CD8-positive, alpha-beta T cell (primary cell): ENCODE measurements at regions of chr5 and their contacts with region 1.

Region 1: DNA sequence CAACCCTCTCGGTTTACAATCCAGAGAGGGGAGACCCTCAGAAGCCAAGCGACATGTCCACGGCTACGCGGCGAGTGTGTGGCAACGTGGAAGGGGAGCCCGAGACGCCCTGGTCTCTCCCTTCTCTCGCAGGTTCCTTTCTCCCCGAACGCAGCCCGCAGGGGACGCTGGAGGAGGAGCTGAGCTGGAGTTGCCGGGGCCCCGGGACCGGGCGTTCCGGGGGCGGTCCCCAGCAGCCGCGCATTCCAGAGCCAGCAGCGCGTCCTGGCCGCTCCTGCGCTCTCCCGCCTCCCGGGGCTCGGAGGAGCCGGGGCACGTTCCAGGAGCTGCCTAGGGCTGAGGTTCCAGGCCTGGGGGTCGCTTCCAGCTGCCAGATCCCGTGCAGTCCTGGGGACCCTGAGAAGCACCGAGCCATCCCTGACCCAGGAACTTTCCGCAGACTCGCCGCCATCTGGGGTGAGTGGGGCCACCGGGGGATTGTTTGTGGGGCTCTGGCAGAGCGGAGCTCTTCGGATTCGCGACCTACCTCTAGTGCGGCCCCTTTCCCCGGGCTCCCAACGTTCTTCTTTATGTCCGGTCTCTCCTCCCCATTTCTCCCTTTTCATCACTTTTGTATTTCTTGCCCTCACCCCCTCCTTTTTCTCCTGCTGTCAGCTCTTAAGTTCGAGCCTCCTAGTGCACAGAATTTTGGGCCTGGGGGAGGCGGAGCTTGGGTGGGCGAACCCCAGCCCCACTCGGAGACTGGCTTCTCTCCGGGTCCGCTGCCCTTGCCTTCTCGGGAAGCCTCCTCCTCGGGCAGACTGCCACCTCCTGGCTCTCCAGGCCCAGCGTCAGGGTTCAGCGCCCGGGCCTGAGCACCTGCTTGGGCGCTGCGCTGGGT is at the start of gene SMIM3:
- DNase-seq: peak; percentile 39 to 80 (median 70)
- ATAC-seq: peak; percentile 58
- H3K4me3 ChIP-seq: peak within 1 kb of the TSS; percentile 70 to 88
- H3K4me3 Mint-ChIP-seq: peak within 1 kb of the TSS; percentile 96
- H3K27ac ChIP-seq: peak within 1 kb of the TSS; percentile 41 to 65
- H3K27ac Mint-ChIP-seq: peak within 1 kb of the TSS; percentile 91
- H3K4me1 ChIP-seq: peaks cover 33% of the 10 kb centered on the region
- H3K4me1 Mint-ChIP-seq: peaks cover 57% of the 10 kb centered on the region
- H3K27me3 ChIP-seq: no peaks in the 10 kb centered on the region
- H3K27me3 Mint-ChIP-seq: no peaks in the 10 kb centered on the region
- CTCF ChIP-seq: no peak
- total RNA-seq, gene SMIM3: 4.6 to 4.9 TPM

Region 2: DNA sequence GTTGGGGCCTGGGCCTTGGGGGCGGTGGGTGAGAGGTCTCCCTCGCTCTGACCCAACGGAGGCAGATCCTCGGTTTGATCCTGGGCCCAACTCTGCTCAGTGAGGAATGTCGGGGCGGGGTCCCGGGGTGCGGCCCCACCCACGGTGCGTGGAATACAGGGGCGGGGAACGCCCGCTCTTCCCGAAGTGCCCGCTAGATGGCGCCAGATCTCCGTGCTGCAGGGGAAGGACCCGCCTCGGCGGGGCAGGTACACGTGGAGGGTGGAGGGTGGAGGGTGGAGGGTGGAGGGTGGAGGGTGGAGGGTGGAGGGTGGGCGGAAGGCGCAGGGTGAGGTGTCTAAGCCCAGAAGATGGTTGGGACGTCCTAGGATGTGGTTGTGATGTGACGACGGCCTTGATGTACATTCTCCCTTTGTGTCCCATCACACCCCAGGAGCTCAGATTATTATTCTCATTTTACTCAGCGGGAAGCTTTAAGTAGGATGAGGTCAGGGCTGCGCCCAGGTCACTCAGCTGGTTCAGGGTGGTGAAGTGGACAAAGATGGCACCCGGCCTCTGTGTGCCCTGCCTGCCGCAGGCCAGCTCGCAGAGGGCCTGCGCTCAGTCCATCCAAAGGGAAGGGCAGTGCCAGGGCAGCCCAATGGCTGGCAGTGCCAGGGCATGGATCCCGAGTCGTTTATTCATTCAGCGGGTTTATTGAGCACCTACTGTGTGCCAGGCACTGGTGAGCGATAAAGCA is 319.8 kb before region 1 on chr5:
- CTCF ChIA-PET with region 1: interaction called, 10 read pairs
- POLR2A ChIA-PET with region 1: no interaction called
- intact Hi-C with region 1: loop called in 1 of 2 experiments (anchors 2 kb)
- DNase-seq: peak; percentile 73 to 93 (median 84)
- ATAC-seq: peak; percentile 93
- H3K4me3 ChIP-seq: no peak overlapping the region
- H3K4me3 Mint-ChIP-seq: peak overlapping the region; percentile 51
- H3K27ac ChIP-seq: peak overlapping the region; percentile 13 to 31
- H3K27ac Mint-ChIP-seq: peak overlapping the region; percentile 67
- H3K4me1 ChIP-seq: peaks cover 20% of the 10 kb centered on the region
- H3K4me1 Mint-ChIP-seq: peaks cover 37% of the 10 kb centered on the region
- H3K27me3 ChIP-seq: no peaks in the 10 kb centered on the region
- H3K27me3 Mint-ChIP-seq: no peaks in the 10 kb centered on the region
- CTCF ChIP-seq: peak; percentile 68

Region 3: GRCh38 chr5:150700594-150701293 is 78.0 kb before region 1 on chr5 and contains the start of gene RBM22:
- CTCF ChIA-PET with region 1: interaction called, 17 read pairs
- POLR2A ChIA-PET with region 1: interaction called, 16 read pairs
- intact Hi-C with region 1: loop called (anchors 1 to 2 kb)
- DNase-seq: peak; percentile 82 to 96 (median 94)
- ATAC-seq: peak; percentile 90
- H3K4me3 ChIP-seq: peak within 1 kb of the TSS; percentile 80 to 81
- H3K4me3 Mint-ChIP-seq: no peak within 1 kb of the TSS
- H3K27ac ChIP-seq: peak within 1 kb of the TSS; percentile 94 to 97
- H3K27ac Mint-ChIP-seq: no peak within 1 kb of the TSS
- H3K4me1 ChIP-seq: peaks cover 19% of the 10 kb centered on the region
- H3K4me1 Mint-ChIP-seq: peaks cover 2% of the 10 kb centered on the region
- H3K27me3 ChIP-seq: no peaks in the 10 kb centered on the region
- H3K27me3 Mint-ChIP-seq: no peaks in the 10 kb centered on the region
- CTCF ChIP-seq: peak; percentile 85
- total RNA-seq, gene RBM22: 119 to 125 TPM

Region 4: DNA sequence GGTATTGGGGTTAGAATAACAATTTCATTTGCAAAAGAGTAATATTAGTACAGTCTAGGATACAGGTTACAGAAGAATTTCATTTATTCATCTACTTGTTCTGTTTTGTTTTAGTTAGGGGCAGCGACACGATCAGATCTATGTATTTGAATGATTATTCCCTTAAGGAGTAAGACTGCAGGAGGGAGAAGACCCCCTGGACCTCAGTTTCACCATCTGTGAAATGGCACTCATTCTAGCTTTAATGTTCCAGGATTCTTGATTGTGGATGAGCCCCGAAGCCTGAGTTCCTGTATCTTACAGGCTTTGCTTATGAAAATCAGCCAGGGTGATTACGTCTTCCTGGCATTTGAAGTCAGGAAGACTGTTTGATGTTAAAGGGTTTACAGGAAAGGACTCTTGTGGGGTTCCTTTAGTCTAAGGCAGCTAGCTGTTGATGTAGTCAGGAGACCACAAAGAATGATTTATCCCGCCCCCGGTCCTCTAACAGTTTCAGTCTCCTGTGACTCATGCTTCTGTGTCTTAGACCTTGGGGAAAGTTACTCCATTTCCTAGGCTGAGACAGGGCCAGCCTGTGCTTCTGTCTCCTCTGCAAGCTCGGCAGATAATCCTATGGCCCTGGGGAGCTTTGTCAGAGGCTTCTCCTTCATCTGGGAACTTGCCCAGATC is 11.3 kb after region 1 on chr5:
- CTCF ChIA-PET with region 1: interaction called, 8 read pairs
- POLR2A ChIA-PET with region 1: interaction called, 4 read pairs
- intact Hi-C with region 1: loop called in 1 of 2 experiments (anchors 1 kb)
- DNase-seq: peak in 8 of 9 experiments; percentile 35 to 79 (median 65)
- ATAC-seq: peak; percentile 95
- H3K4me3 ChIP-seq: peak overlapping the region in 1 of 2 experiments; percentile 24
- H3K4me3 Mint-ChIP-seq: peak overlapping the region; percentile 57
- H3K27ac ChIP-seq: peak overlapping the region in 1 of 2 experiments; percentile 50
- H3K27ac Mint-ChIP-seq: peak overlapping the region; percentile 52
- H3K4me1 ChIP-seq: peaks cover 14% of the 10 kb centered on the region
- H3K4me1 Mint-ChIP-seq: peaks cover 43% of the 10 kb centered on the region
- H3K27me3 ChIP-seq: no peaks in the 10 kb centered on the region
- H3K27me3 Mint-ChIP-seq: no peaks in the 10 kb centered on the region
- CTCF ChIP-seq: no peak

Region 5: GRCh38 chr5:150816946-150817345 is 38.2 kb after region 1 on chr5:
- CTCF ChIA-PET with region 1: no interaction called
- POLR2A ChIA-PET with region 1: no interaction called
- intact Hi-C with region 1: no loop called
- DNase-seq: no peak
- ATAC-seq: no peak
- H3K4me3 ChIP-seq: no peak overlapping the region
- H3K4me3 Mint-ChIP-seq: no peak overlapping the region
- H3K27ac ChIP-seq: no peak overlapping the region
- H3K27ac Mint-ChIP-seq: no peak overlapping the region
- H3K4me1 ChIP-seq: no peaks in the 10 kb centered on the region
- H3K4me1 Mint-ChIP-seq: no peaks in the 10 kb centered on the region
- H3K27me3 ChIP-seq: no peaks in the 10 kb centered on the region
- H3K27me3 Mint-ChIP-seq: peaks cover 16% of the 10 kb centered on the region
- CTCF ChIP-seq: no peak

Region 6: GRCh38 chr5:150846654-150847333 is 68.0 kb after region 1 on chr5:
- CTCF ChIA-PET with region 1: interaction called, 15 read pairs
- POLR2A ChIA-PET with region 1: interaction called, 5 read pairs
- intact Hi-C with region 1: loop called in 1 of 2 experiments (anchors 1 kb)
- DNase-seq: peak in 8 of 9 experiments; percentile 39 to 93 (median 64)
- ATAC-seq: peak; percentile 90
- H3K4me3 ChIP-seq: peak overlapping the region; percentile 7 to 46
- H3K4me3 Mint-ChIP-seq: peak overlapping the region; percentile 78
- H3K27ac ChIP-seq: peak overlapping the region; percentile 4 to 57
- H3K27ac Mint-ChIP-seq: peak overlapping the region; percentile 87
- H3K4me1 ChIP-seq: no peaks in the 10 kb centered on the region
- H3K4me1 Mint-ChIP-seq: peaks cover 22% of the 10 kb centered on the region
- H3K27me3 ChIP-seq: no peaks in the 10 kb centered on the region
- H3K27me3 Mint-ChIP-seq: no peaks in the 10 kb centered on the region
- CTCF ChIP-seq: peak; percentile 75

Region 7: GRCh38 chr5:151157426-151158286 is 378.9 kb after region 1 on chr5 and contains the start of gene ANXA6:
- CTCF ChIA-PET with region 1: no interaction called
- POLR2A ChIA-PET with region 1: no interaction called
- intact Hi-C with region 1: loop called in 1 of 2 experiments (anchors 10 kb)
- DNase-seq: peak in 8 of 9 experiments; percentile 50 to 86 (median 66)
- ATAC-seq: peak; percentile 70
- H3K4me3 ChIP-seq: peak within 1 kb of the TSS; percentile 52 to 94
- H3K4me3 Mint-ChIP-seq: peak within 1 kb of the TSS; percentile 97
- H3K27ac ChIP-seq: peak within 1 kb of the TSS; percentile 68 to 90
- H3K27ac Mint-ChIP-seq: peak within 1 kb of the TSS; percentile 95
- H3K4me1 ChIP-seq: peaks cover 43% of the 10 kb centered on the region
- H3K4me1 Mint-ChIP-seq: peaks cover 65% of the 10 kb centered on the region
- H3K27me3 ChIP-seq: no peaks in the 10 kb centered on the region
- H3K27me3 Mint-ChIP-seq: no peaks in the 10 kb centered on the region
- CTCF ChIP-seq: no peak
- total RNA-seq, gene ANXA6: 83.5 to 89.4 TPM